ENCODE measurements at regions of chr20 and their contacts with region 1.

Region 1: GRCh38 chr20:34180460-34181120 is 60.6 kb upstream of the ASIP start:
- H3K4me3 ChIP-seq: no peak overlapping the region
- H3K27ac ChIP-seq: no peak overlapping the region
- H3K4me1 ChIP-seq: no peaks in the 10 kb centered on the region
- CTCF ChIP-seq: no peak

Region 2: GRCh38 chr20:34165018-34165619 is 15.5 kb before region 1 on chr20:
- CTCF ChIA-PET with region 1: no interaction called
- POLR2A ChIA-PET with region 1: no interaction called
- H3K4me3 ChIP-seq: no peak overlapping the region
- H3K27ac ChIP-seq: no peak overlapping the region
- H3K4me1 ChIP-seq: no peaks in the 10 kb centered on the region
- CTCF ChIP-seq: no peak

Region 3: DNA sequence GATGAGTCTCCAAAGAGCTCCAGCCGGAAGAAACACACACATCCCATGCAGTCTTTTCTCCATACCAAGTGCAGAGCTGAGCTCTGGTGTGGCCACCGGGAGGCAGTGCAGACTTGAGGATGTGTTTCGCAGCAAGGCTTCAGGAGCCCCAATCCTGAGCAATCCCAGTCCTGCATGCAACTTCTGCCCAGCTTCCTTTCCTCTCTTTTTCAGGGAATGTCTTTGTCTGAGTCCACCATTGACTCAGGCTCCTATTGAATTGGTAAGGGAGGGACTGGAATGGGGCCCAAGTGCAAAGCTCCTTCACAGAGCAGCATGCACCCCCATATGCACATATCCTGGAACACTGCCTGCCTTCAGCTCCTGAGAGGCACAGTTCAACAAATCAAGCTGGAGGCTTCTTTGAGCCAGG is 10.1 kb after region 1 on chr20:
- CTCF ChIA-PET with region 1: interaction called, 12 read pairs
- POLR2A ChIA-PET with region 1: no interaction called
- H3K4me3 ChIP-seq: no peak overlapping the region
- H3K27ac ChIP-seq: no peak overlapping the region
- H3K4me1 ChIP-seq: peaks cover 3% of the 10 kb centered on the region; the same call in 1 of the 2 replicates
- CTCF ChIP-seq: peak; percentile 75; the same call in 1 of the 2 replicates

Region 4: DNA sequence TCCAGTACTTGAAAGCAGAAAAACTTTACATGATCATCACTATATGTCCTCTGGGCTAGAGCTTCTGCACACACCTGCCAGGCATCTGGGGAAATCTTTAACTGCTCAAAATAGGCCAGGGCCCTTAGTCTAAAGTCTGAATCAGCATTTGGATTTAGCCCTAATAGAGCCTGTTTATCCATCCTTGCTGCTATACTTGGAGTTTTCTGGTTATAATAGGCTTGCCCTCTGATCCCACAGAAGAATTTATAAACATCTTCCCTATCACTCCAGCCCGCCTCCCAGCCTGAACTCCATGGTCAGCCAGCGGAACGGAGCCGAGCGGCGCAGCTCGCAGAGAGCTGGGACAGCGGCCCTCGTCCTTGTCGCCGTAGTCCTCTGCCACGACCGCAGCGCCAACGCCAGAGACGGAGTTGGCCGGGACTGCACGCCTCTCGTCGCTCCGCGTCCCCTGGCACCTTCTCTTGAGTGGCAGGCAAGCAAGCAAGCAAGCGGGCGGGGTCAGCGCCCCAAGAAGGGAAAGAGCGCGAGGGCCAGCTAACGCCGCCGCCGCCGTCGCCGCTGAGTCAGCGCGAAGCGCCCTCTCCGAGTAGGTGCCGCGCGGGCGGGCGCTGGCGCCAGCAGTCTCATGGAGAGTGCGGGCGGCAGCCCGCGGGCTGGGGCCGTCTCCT is 35.3 kb after region 1 on chr20:
- CTCF ChIA-PET with region 1: no interaction called
- POLR2A ChIA-PET with region 1: no interaction called
- H3K4me3 ChIP-seq: peak overlapping the region; percentile 11
- H3K27ac ChIP-seq: peak overlapping the region; percentile 27; the same call in 1 of the 2 replicates
- H3K4me1 ChIP-seq: no peaks in the 10 kb centered on the region
- CTCF ChIP-seq: no peak